A549 (cell line): ENCODE measurements at regions of chr6 and their contacts with region 1.

Region 1: DNA sequence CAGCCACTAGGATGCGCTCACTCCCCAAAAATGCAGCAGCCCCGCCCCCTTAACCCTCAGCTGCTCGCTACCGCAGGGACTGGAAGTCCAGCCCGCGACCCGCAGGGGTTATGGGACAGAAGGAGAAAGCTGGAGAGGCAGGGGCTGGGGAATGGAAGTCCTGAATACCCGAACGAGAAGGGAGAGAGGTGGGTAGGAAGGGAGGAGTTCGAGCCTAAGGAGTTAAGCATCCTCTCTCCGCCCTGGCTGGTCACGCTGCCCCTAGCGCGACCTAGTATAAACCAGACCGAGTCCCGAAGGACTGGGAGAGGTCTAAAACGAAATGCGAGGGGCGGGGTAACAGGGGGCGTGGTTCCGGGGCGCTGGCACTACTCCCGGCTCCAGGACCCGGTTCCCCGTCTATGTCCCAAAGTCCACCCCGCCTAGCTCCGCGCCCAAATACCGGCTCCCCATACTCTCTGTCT is 448 bp upstream of the DDAH2 start:
- DNase-seq: peak; percentile 80 to 85
- ATAC-seq: peak; percentile 85 to 88
- H3K4me3 ChIP-seq: peak overlapping the region; percentile 58
- H3K27ac ChIP-seq: peak overlapping the region; percentile 76 to 95
- H3K4me1 ChIP-seq: peaks cover 17% of the 10 kb centered on the region
- CTCF ChIP-seq: peak; percentile 68
- EP300 ChIP-seq: no peak
- POLR2A ChIP-seq: peak; percentile 35
- RAD21 ChIP-seq: peak; percentile 77 to 85; a peak in 4 of 5 replicates

Region 2: GRCh38 chr6:30942338-30943060 is 787.0 kb before region 1 on chr6:
- CTCF ChIA-PET with region 1: no interaction called
- POLR2A ChIA-PET with region 1: no interaction called
- DNase-seq: peak; percentile 85 to 87
- ATAC-seq: peak; percentile 95 to 97
- H3K4me3 ChIP-seq: peak overlapping the region; percentile 12; the same call in 1 of the 3 replicates
- H3K27ac ChIP-seq: peak overlapping the region; percentile 80 to 84
- H3K4me1 ChIP-seq: peaks cover 14% of the 10 kb centered on the region
- CTCF ChIP-seq: peak; percentile 41
- EP300 ChIP-seq: no peak
- POLR2A ChIP-seq: no peak
- RAD21 ChIP-seq: peak; percentile 56; a peak in 4 of 5 replicates

Region 3: GRCh38 chr6:31680840-31681671 is 48.5 kb before region 1 on chr6 and contains the start of gene LY6G5C:
- CTCF ChIA-PET with region 1: interaction called, 26 read pairs
- POLR2A ChIA-PET with region 1: no interaction called
- DNase-seq: peak; percentile 67 to 83
- ATAC-seq: peak; percentile 82 to 90
- H3K4me3 ChIP-seq: peak within 1 kb of the TSS; percentile 22; the same call in 2 of the 3 replicates
- H3K27ac ChIP-seq: peak within 1 kb of the TSS in 1 of 2 experiments; percentile 78; a peak in 3 of 6 replicates
- H3K4me1 ChIP-seq: peaks cover 8% of the 10 kb centered on the region; the same call in 1 of the 3 replicates
- CTCF ChIP-seq: peak; percentile 70
- EP300 ChIP-seq: no peak
- POLR2A ChIP-seq: no peak
- RAD21 ChIP-seq: peak; percentile 80 to 90
- polyA plus RNA-seq, gene LY6G5C: 1.2 and 1.6 TPM in 2 replicates

Region 4: DNA sequence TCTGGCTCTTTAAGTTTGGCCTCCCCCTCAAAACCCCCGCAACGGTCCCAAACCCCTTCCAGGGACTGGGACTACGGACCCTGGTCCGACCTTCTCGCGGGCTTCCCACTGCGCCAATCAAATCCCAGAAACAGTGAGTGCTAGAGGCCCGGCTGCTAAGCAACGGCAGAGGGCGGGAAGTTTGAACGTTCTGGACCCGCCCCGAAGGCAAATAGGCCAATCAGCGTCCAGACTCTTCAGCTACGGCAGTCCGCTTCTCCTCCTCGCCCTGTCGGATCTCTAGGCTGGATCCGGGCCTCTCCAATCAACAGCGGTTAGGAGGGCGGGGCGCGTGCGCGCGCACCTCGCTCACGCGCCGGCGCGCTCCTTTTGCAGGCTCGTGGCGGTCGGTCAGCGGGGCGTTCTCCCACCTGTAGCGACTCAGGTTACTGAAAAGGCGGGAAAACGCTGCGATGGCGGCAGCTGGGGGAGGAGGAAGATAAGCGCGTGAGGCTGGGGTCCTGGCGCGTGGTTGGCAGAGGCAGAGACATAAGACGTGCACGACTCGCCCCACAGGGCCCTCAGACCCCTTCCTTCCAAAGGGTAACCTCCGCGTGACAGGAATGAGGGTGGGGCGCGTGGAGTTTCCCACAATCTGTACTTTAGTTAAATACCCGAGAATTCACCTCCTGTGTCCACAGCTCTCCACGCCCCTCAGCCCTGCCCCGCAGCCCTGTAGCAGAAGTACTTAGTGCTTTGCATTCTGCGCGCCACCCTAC is 10.3 kb after region 1 on chr6 and contains the start of gene MSH5:
- CTCF ChIA-PET with region 1: interaction called, 30 read pairs
- POLR2A ChIA-PET with region 1: interaction called, 4 read pairs
- DNase-seq: peak; percentile 92 to 99
- ATAC-seq: peak; percentile 84 to 90
- H3K4me3 ChIP-seq: peak within 1 kb of the TSS; percentile 67
- H3K27ac ChIP-seq: peak within 1 kb of the TSS; percentile 94 to 99
- H3K4me1 ChIP-seq: peaks cover 42% of the 10 kb centered on the region
- CTCF ChIP-seq: no peak
- EP300 ChIP-seq: no peak
- POLR2A ChIP-seq: peak; percentile 52
- RAD21 ChIP-seq: no peak
- polyA plus RNA-seq, gene MSH5: 36.5 and 42.6 TPM in 2 replicates